GM18951 (cell line): ENCODE measurements at regions of chr17 and their contacts with region 1.

Region 1: GRCh38 chr17:63399856-63400255 is 46.2 kb downstream of the CYB561 start:
- POLR2A ChIP-seq: no peak

Region 2: DNA sequence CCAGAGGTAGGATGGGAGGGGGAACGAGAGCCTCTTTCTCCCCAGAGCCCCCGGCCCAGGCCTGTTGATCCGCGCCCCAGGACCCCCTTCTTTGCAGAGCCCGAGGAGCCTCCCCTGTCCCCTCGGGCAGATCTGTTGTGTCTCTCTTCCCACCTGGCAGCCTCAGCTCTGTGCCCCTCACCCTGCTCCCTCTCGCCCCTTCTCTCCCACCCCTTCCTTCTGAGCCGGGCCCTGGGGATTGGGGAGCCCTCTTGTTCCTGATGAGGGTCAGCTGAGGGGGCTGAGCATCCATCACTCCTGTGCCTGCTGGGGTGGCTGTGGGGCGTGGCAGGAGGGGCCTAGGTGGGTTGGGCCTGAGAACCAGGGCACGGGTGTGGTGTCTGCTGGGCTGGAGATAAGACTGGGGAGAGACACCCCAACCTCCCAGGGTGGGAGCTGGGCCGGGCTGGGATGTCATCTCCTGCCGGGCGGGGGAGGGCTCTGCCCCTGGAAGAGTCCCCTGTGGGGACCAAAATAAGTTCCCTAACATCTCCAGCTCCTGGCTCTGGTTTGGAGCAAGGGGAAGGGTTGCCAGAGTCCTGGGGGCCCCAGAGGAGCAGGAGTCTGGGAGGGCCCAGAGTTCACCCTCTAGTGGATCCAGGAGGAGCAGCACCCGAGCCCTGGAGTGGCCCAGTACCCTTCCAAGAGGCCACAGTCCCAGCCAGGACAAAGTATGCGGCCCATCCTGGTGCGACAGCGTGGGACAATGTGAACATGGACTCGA is 707.0 kb before region 1 on chr17:
- in situ Hi-C with region 1: loop called (anchors 25 kb)
- POLR2A ChIP-seq: no peak

Region 3: GRCh38 chr17:63082273-63082993 is 317.4 kb before region 1 on chr17:
- in situ Hi-C with region 1: loop called (anchors 25 kb)
- POLR2A ChIP-seq: no peak

Region 4: GRCh38 chr17:63349478-63350000 is 50.3 kb before region 1 on chr17:
- in situ Hi-C with region 1: no loop called
- POLR2A ChIP-seq: no peak

Region 5: GRCh38 chr17:63478791-63479494 is 79.1 kb after region 1 on chr17:
- in situ Hi-C with region 1: no loop called
- POLR2A ChIP-seq: no peak

Region 6: GRCh38 chr17:63600569-63601438 is 200.9 kb after region 1 on chr17 and contains the start of gene TACO1:
- in situ Hi-C with region 1: no loop called
- POLR2A ChIP-seq: peak; percentile 78